PC-9 (cell line): ENCODE measurements at regions of chr14 and their contacts with region 1.

Region 1: GRCh38 chr14:49633640-49634546 is 1.2 kb downstream of the DNAAF2 start:
- DNase-seq: peak; percentile 82 to 94
- H3K4me3 ChIP-seq: peak overlapping the region; percentile 89
- H3K27ac ChIP-seq: peak overlapping the region; percentile 89
- H3K4me1 ChIP-seq: peaks cover 36% of the 10 kb centered on the region
- H3K27me3 ChIP-seq: no peaks in the 10 kb centered on the region
- CTCF ChIP-seq: peak; percentile 74

Region 2: DNA sequence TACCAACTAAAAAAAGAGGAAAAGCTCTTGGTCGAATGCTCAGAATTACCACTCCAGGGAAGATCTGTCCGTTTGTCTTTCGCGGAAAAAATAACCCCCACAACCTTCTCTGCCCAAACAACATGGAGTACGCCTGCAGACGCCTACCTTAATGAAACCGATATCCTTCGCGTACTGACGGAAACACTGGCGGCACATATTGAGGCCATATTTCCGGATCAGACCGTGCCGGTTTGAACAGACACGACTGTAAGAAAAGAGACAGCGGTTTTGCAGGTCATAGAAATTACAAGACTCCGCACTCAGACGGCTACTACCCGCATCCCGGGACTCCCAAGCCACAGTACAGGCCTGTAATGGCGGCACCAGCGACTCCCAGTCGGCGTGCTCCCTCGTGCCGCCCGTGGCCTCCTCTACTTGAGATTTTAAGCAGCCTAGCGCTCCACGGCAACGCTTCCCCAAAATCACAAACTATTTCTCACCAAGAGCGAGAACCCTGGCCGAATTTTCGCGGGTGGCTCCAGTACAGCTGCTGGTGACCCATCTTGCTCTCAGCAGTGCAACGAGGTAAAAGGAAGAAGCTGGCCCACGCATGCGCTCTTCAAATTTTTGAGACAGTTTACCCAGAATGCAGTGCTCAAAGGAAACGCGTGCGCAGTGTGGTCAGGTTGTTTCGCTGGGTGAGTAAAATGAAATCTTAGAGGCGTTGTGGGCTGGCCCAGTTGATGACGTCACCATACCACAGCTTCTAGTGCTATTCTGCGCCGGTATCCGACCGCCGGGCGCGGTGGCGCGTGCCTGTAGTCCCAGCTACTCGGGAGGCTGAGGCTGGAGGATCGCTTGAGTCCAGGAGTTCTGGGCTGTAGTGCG is 47.9 kb before region 1 on chr14 and contains the start of gene RPS29:
- CTCF ChIA-PET with region 1: interaction called, 11 read pairs
- POLR2A ChIA-PET with region 1: interaction called, 4 read pairs
- intact Hi-C with region 1: loop called (anchors 2 kb)
- DNase-seq: peak; percentile 95 to 97
- H3K4me3 ChIP-seq: peak within 1 kb of the TSS; percentile 97
- H3K27ac ChIP-seq: peak within 1 kb of the TSS; percentile 85
- H3K4me1 ChIP-seq: peaks cover 32% of the 10 kb centered on the region
- H3K27me3 ChIP-seq: no peaks in the 10 kb centered on the region
- CTCF ChIP-seq: no peak
- total RNA-seq, gene RPS29: 1,018 and 1,294 TPM in 2 replicates

Region 3: DNA sequence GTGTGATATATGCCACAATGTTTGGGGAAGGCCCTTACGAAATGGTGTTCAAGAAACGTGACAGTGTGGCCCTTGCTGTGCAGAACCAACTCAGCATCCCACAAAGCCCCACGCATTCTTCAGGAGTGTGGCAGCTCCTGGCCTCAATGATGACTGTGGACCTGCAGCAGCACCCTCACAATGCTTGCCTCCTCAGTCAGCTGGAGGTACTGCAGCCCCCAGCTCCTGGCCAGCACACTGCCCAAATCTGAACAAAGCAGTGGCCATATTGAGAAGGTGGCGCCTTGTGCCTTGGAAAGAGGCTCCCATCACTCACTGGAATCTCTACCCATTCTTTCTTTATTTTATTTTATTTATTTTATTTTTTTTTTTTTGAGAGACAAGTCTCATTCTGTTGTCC is 43.8 kb after region 1 on chr14:
- CTCF ChIA-PET with region 1: interaction called, 14 read pairs
- POLR2A ChIA-PET with region 1: interaction called, 7 read pairs
- intact Hi-C with region 1: no loop called
- DNase-seq: no peak
- H3K4me3 ChIP-seq: no peak overlapping the region
- H3K27ac ChIP-seq: no peak overlapping the region
- H3K4me1 ChIP-seq: peaks cover 8% of the 10 kb centered on the region
- H3K27me3 ChIP-seq: no peaks in the 10 kb centered on the region
- CTCF ChIP-seq: no peak

Region 4: GRCh38 chr14:49828640-49829039 is 194.7 kb after region 1 on chr14:
- CTCF ChIA-PET with region 1: interaction called, 4 read pairs
- POLR2A ChIA-PET with region 1: no interaction called
- intact Hi-C with region 1: loop called (anchors 1 kb)
- DNase-seq: no peak
- H3K4me3 ChIP-seq: no peak overlapping the region
- H3K27ac ChIP-seq: no peak overlapping the region
- H3K4me1 ChIP-seq: no peaks in the 10 kb centered on the region
- H3K27me3 ChIP-seq: no peaks in the 10 kb centered on the region
- CTCF ChIP-seq: no peak

Region 5: GRCh38 chr14:50109342-50109741 is 475.4 kb after region 1 on chr14:
- CTCF ChIA-PET with region 1: no interaction called
- POLR2A ChIA-PET with region 1: no interaction called
- intact Hi-C with region 1: loop called (anchors 5 kb)
- DNase-seq: no peak
- H3K4me3 ChIP-seq: no peak overlapping the region
- H3K27ac ChIP-seq: no peak overlapping the region
- H3K4me1 ChIP-seq: peaks cover 7% of the 10 kb centered on the region; the same call in 1 of the 2 replicates
- H3K27me3 ChIP-seq: no peaks in the 10 kb centered on the region
- CTCF ChIP-seq: peak; percentile 34

Region 6: GRCh38 chr14:50559990-50560930 is 926.4 kb after region 1 on chr14 and contains the start of gene ATL1:
- CTCF ChIA-PET with region 1: no interaction called
- POLR2A ChIA-PET with region 1: interaction called, 20 read pairs
- intact Hi-C with region 1: no loop called
- DNase-seq: peak in 1 of 2 experiments; percentile 46
- H3K4me3 ChIP-seq: peak within 1 kb of the TSS; percentile 74
- H3K27ac ChIP-seq: no peak within 1 kb of the TSS
- H3K4me1 ChIP-seq: no peaks in the 10 kb centered on the region
- H3K27me3 ChIP-seq: peaks cover 8% of the 10 kb centered on the region; the same call in 1 of the 2 replicates
- CTCF ChIP-seq: no peak
- total RNA-seq, gene ATL1: 3.8 and 4.3 TPM in 2 replicates